ENCODE measurements at regions of chr3 and their contacts with region 1.

Region 1: GRCh38 chr3:155682426-155683343 is 62.2 kb downstream of the PLCH1 start:
- DNase-seq: no peak
- ATAC-seq: no peak
- H3K4me3 ChIP-seq: no peak overlapping the region
- H3K27ac ChIP-seq: no peak overlapping the region
- H3K4me1 ChIP-seq: no peaks in the 10 kb centered on the region
- H3K27me3 ChIP-seq: no peaks in the 10 kb centered on the region
- CTCF ChIP-seq: no peak
- POLR2A ChIP-seq: no peak

Region 2: DNA sequence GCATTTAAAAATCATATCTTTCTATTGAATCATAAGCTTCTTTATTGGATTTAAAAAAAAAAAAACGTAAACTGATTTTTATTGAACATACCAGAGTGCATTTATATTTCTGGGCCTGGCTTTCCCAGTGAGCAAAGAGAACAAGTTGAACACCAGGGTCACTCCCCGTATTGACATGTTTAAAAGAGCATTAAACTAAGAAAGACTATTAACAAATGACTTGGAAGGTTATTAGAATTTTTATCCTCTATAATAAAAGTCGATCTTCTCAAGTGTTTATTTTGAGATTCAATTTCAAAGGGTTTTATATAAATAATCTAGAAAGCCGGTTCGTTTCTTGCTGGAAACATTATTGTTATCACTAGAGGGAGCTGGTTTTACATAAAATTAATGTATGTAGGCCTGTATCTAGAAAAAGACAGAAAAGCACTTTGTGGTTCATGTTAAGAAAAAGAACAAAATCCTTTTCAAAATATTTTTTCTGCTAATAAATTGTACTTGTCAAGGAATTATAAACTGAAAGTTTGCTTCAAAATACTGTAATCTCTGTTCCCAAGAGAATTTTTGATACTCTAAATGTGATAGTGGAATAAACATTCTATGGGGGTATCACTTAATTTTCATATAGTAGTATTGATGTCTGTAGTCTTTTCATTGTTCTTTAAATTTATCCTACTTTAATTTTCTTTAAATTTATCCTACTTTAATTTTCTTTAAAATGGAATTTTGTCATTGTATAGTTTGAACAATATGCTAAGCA is 924.4 kb before region 1 on chr3:
- intact Hi-C with region 1: loop called in 1 of 10 experiments (anchors 10 kb)
- DNase-seq: no peak
- ATAC-seq: no peak
- H3K4me3 ChIP-seq: no peak overlapping the region
- H3K27ac ChIP-seq: peak overlapping the region in 1 of 12 donors; percentile 12
- H3K4me1 ChIP-seq: peaks cover 0 to 3% (median 0%) of the 10 kb centered on the region in 12 donors
- H3K27me3 ChIP-seq: no peaks in the 10 kb centered on the region
- CTCF ChIP-seq: peak; percentile 9 to 68 (median 48)
- POLR2A ChIP-seq: no peak

Region 3: DNA sequence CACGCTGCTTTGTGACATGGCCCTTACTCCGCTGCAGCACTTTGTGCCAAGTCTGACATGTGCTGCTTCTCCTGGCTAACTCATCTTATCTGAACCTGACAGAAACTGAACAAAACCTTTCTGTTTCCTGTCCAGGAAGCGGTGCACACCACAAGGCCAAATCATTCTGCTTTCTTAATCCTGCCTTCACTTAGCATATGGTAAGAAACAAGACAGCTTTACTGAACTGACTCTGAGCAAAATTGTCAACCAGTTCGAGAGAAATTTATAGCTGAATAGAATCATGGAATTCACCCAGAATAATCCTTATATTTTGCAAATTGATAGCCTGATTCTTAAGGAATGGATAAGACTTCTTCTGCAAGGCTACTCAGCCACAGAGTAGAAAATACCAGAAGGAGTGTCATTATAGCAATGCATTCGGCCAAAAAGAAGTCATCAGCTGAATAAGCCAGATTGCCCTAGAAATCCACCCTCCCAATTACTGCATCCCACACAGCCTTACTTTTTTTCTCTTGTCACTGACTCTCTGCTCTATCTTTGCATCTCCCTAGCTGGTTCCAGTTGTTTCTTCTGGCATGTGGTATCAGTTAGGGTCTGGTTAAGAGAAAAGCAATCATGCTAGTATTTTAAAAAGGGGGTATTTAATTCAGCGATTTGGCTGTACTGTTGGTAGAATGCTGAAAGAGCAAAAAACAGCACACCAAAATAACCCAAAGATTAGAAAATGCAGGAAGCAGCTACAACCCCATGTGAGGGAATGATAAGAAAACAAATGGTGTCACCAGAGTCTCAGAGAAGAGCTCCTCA is 347.6 kb before region 1 on chr3:
- intact Hi-C with region 1: no loop called
- DNase-seq: no peak
- ATAC-seq: peak in 1 of 4 donors; percentile 36
- H3K4me3 ChIP-seq: no peak overlapping the region
- H3K27ac ChIP-seq: no peak overlapping the region
- H3K4me1 ChIP-seq: peaks cover 0 to 5% (median 0%) of the 10 kb centered on the region in 12 donors
- H3K27me3 ChIP-seq: no peaks in the 10 kb centered on the region
- CTCF ChIP-seq: no peak
- POLR2A ChIP-seq: no peak

Region 4: GRCh38 chr3:156098437-156099035 is 415.9 kb after region 1 on chr3:
- intact Hi-C with region 1: no loop called
- DNase-seq: no peak
- ATAC-seq: no peak
- H3K4me3 ChIP-seq: no peak overlapping the region
- H3K27ac ChIP-seq: no peak overlapping the region
- H3K4me1 ChIP-seq: peaks cover 0 to 8% (median 0%) of the 10 kb centered on the region in 12 donors
- H3K27me3 ChIP-seq: no peaks in the 10 kb centered on the region
- CTCF ChIP-seq: no peak
- POLR2A ChIP-seq: no peak

Measured in heart left ventricle (tissue), 16 donors.